Calu3 (cell line): ENCODE measurements at regions of chr4 and their contacts with region 1.

Region 1: GRCh38 chr4:41009411-41009810 is 204.9 kb downstream of the APBB2 start:
- DNase-seq: no peak
- H3K4me3 Mint-ChIP-seq: no peak overlapping the region
- H3K27ac Mint-ChIP-seq: no peak overlapping the region
- H3K4me1 Mint-ChIP-seq: no peaks in the 10 kb centered on the region
- H3K27me3 Mint-ChIP-seq: no peaks in the 10 kb centered on the region
- CTCF ChIP-seq: no peak

Region 2: GRCh38 chr4:41074215-41074614 is 64.8 kb after region 1 on chr4:
- CTCF ChIA-PET with region 1: no interaction called
- intact Hi-C with region 1: loop called (anchors 2 kb)
- DNase-seq: no peak
- H3K4me3 Mint-ChIP-seq: no peak overlapping the region
- H3K27ac Mint-ChIP-seq: no peak overlapping the region
- H3K4me1 Mint-ChIP-seq: peaks cover 6% of the 10 kb centered on the region
- H3K27me3 Mint-ChIP-seq: no peaks in the 10 kb centered on the region
- CTCF ChIP-seq: no peak